ENCODE measurements at regions of chr3 and their contacts with region 1.

Region 1: DNA sequence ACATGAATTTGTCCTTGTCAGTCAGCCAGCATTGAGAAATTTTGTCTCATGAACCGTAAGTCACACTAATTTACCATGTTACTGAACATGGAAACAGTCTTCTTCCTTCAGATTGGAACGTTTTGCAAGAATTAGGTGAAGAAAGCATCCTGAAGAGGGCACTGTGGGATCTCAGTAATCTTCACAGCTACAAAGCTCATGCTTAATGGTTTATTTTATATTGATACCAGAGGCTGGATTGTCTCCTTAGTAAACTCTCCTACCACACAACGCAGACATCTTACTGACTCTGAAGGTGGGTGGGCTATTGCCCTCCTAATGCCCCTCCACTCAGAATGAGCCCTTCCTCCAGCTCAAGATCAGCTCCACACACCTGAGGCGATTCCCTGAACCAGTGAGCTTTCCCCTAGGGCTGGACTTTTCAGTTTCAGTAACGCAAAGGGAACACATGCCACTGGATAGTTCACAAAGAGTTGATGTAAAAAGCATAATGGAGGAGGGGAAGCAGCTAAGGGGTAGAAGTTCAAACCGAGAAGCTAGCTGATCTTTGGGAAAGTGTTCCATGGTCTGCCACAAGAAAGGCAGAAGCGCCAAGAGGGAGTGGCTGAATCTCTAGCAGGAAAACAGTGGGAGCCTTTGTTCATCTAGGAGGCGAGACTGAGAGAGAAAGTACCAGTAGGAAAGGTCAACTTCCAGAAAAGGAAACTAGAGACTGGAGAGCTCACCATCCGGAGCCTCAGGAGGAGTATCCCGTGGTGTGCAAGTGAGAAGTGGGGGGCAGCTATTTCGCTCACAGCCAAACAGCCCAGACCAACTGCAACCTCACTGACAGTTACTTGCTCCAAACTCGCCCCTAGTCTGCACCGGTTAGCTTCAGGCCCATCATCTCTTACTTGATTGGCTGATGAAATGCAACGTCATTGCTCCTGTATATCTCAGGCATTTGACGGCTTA is at the start of gene SLC9C1:
- DNase-seq: peak; percentile 49 to 66
- H3K4me3 ChIP-seq: peak within 1 kb of the TSS; percentile 45
- H3K4me3 Mint-ChIP-seq: peak within 1 kb of the TSS; percentile 89
- H3K27ac Mint-ChIP-seq: peak within 1 kb of the TSS; percentile 78
- H3K4me1 ChIP-seq: no peaks in the 10 kb centered on the region
- H3K4me1 Mint-ChIP-seq: no peaks in the 10 kb centered on the region
- H3K27me3 ChIP-seq: no peaks in the 10 kb centered on the region
- H3K27me3 Mint-ChIP-seq: no peaks in the 10 kb centered on the region
- CTCF ChIP-seq: peak; percentile 57 to 68
- total RNA-seq, gene SLC9C1: 0.23 TPM in 1 of 2 replicates, not detected in the other

Region 2: GRCh38 chr3:112136959-112137693 is 156.5 kb before region 1 on chr3:
- CTCF ChIA-PET with region 1: interaction called, 13 read pairs
- POLR2A ChIA-PET with region 1: no interaction called
- intact Hi-C with region 1: loop called (anchors 1 kb)
- DNase-seq: peak in 1 of 2 experiments; percentile 55
- H3K4me3 ChIP-seq: no peak overlapping the region
- H3K4me3 Mint-ChIP-seq: no peak overlapping the region
- H3K27ac Mint-ChIP-seq: no peak overlapping the region
- H3K4me1 ChIP-seq: no peaks in the 10 kb centered on the region
- H3K4me1 Mint-ChIP-seq: peaks cover 5% of the 10 kb centered on the region
- H3K27me3 ChIP-seq: no peaks in the 10 kb centered on the region
- H3K27me3 Mint-ChIP-seq: no peaks in the 10 kb centered on the region
- CTCF ChIP-seq: peak; percentile 66 to 79

Region 3: DNA sequence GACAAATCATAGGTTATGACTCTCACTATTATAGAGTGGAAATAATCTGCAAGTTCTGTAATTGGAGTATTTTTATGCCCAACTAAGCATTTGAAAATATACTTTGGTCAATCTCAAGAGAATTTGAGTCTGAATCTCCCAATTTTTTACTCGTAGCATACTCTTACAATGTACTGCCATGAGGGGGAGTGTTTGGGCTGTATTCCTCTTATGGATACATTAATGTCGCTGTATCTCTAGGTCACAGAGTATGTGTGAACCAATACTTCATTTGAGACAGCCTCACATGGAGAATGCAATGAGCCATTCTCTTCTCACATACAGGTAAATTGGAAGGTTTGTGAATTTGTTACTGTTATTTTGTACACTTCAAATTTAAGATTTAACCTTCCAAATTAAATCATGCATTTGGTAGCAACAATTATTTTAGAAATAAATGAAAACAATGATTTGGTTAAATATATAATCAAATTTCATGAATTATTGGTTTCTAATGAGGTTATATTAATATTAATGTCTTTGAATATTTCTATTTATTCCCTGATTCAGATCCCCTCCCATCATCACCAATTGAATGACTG is 33.8 kb after region 1 on chr3:
- CTCF ChIA-PET with region 1: interaction called, 58 read pairs
- POLR2A ChIA-PET with region 1: interaction called, 11 read pairs
- intact Hi-C with region 1: loop called (anchors 1 kb)
- DNase-seq: peak in 1 of 2 experiments; percentile 66
- H3K4me3 ChIP-seq: no peak overlapping the region
- H3K4me3 Mint-ChIP-seq: no peak overlapping the region
- H3K27ac Mint-ChIP-seq: no peak overlapping the region
- H3K4me1 ChIP-seq: peaks cover 8% of the 10 kb centered on the region
- H3K4me1 Mint-ChIP-seq: peaks cover 12% of the 10 kb centered on the region
- H3K27me3 ChIP-seq: no peaks in the 10 kb centered on the region
- H3K27me3 Mint-ChIP-seq: no peaks in the 10 kb centered on the region
- CTCF ChIP-seq: peak; percentile 47 to 60

Region 4: DNA sequence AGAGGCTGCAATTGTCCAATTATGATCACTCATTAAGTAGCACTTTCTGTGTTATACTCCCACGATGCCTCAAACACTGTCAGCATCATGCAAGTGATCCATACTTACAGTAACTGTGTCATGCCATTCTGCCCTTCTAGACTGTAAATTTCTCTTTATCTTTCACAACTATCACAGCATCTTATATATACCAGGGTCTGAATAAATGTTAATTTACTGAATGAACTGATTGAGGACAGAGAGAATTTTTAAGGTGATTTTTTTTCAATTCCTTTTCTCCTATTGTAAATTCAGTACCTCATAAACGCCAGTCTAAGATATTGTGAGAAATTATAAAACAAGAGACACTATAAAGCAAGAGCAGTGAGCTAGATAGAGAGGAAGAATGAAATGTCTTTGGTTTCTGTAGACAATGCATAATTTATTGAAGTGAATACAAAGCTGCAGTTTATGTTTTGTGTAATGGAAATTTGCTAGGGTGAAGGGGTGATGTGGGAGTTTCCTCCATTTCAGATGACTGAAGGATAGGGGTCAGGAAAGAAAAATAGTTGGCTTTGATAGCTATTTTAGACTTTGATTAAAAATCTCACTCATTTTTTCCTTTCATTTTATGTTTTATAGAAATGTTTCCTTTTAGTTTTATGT is 56.7 kb after region 1 on chr3:
- CTCF ChIA-PET with region 1: no interaction called
- POLR2A ChIA-PET with region 1: no interaction called
- intact Hi-C with region 1: no loop called
- DNase-seq: no peak
- H3K4me3 ChIP-seq: no peak overlapping the region
- H3K4me3 Mint-ChIP-seq: no peak overlapping the region
- H3K27ac Mint-ChIP-seq: no peak overlapping the region
- H3K4me1 ChIP-seq: no peaks in the 10 kb centered on the region
- H3K4me1 Mint-ChIP-seq: no peaks in the 10 kb centered on the region
- H3K27me3 ChIP-seq: no peaks in the 10 kb centered on the region
- H3K27me3 Mint-ChIP-seq: peaks cover 11% of the 10 kb centered on the region
- CTCF ChIP-seq: no peak

Region 5: DNA sequence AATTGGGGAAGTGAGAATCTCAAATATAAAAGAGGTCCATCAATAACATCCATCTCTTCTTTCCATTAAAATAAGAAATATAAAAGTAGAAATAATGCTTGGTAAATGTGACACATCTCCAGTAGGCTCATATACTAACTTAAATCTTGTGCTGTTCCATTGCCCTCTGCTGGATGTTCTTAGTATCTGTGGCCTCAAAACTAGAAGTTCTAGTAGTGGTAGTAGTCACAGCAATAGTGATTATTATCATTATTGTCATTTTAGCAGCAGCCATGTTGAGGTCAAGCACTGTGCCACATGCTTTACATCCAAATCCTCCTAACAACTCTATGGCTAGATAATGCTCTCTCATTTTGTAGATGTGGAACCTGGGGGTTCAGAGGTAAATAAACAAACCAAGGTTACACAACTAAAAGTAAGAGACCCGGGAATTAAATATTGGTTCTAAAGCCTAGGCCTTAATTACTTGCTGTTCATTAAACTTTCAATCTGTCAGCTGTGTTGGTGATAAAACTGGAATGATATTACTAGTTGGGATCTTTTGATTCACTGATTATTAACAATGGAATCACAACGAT is 225.9 kb after region 1 on chr3:
- CTCF ChIA-PET with region 1: interaction called, 9 read pairs
- POLR2A ChIA-PET with region 1: no interaction called
- intact Hi-C with region 1: loop called (anchors 1 kb)
- DNase-seq: peak; percentile 35 to 47
- H3K4me3 ChIP-seq: no peak overlapping the region
- H3K4me3 Mint-ChIP-seq: no peak overlapping the region
- H3K27ac Mint-ChIP-seq: no peak overlapping the region
- H3K4me1 ChIP-seq: no peaks in the 10 kb centered on the region
- H3K4me1 Mint-ChIP-seq: no peaks in the 10 kb centered on the region
- H3K27me3 ChIP-seq: no peaks in the 10 kb centered on the region
- H3K27me3 Mint-ChIP-seq: no peaks in the 10 kb centered on the region
- CTCF ChIP-seq: peak; percentile 67 to 74

Measured in Caco-2 (cell line).